Esophagus squamous epithelium (tissue), 5 donors: ENCODE measurements at regions of chr20 and their contacts with region 1.

Region 1: GRCh38 chr20:347640-348484 is 951 bp downstream of the NRSN2 start:
- DNase-seq: no peak
- H3K4me3 ChIP-seq: peak overlapping the region; percentile 68 to 78 (median 76)
- H3K27ac ChIP-seq: peak overlapping the region; percentile 80 to 96 (median 91)
- H3K4me1 ChIP-seq: peaks cover 6 to 34% (median 8%) of the 10 kb centered on the region in 3 donors
- H3K27me3 ChIP-seq: no peaks in the 10 kb centered on the region
- CTCF ChIP-seq: no peak
- POLR2A ChIP-seq: peak in 2 of 4 donors; percentile 19 to 38

Region 2: GRCh38 chr20:391041-391711 is 43.3 kb after region 1 on chr20:
- intact Hi-C with region 1: no loop called
- DNase-seq: no peak
- H3K4me3 ChIP-seq: no peak overlapping the region
- H3K27ac ChIP-seq: no peak overlapping the region
- H3K4me1 ChIP-seq: no peaks in the 10 kb centered on the region
- H3K27me3 ChIP-seq: no peaks in the 10 kb centered on the region
- CTCF ChIP-seq: no peak
- POLR2A ChIP-seq: no peak

Region 3: GRCh38 chr20:653110-653589 is 305.3 kb after region 1 on chr20 and contains the start of gene SRXN1:
- intact Hi-C with region 1: loop called (anchors 10 kb)
- DNase-seq: peak; percentile 39
- H3K4me3 ChIP-seq: peak within 1 kb of the TSS; percentile 68 to 91 (median 82)
- H3K27ac ChIP-seq: peak within 1 kb of the TSS; percentile 89 to 95 (median 92)
- H3K4me1 ChIP-seq: peaks cover 14 to 33% (median 25%) of the 10 kb centered on the region in 3 donors
- H3K27me3 ChIP-seq: peaks cover 0 to 9% (median 0%) of the 10 kb centered on the region in 4 donors
- CTCF ChIP-seq: peak in 5 of 6 experiments; percentile 42 to 67 (median 62)
- POLR2A ChIP-seq: peak in 2 of 4 donors; percentile 49 to 62
- total RNA-seq, gene SRXN1: 73.4 to 158 (median 133) TPM

Region 4: DNA sequence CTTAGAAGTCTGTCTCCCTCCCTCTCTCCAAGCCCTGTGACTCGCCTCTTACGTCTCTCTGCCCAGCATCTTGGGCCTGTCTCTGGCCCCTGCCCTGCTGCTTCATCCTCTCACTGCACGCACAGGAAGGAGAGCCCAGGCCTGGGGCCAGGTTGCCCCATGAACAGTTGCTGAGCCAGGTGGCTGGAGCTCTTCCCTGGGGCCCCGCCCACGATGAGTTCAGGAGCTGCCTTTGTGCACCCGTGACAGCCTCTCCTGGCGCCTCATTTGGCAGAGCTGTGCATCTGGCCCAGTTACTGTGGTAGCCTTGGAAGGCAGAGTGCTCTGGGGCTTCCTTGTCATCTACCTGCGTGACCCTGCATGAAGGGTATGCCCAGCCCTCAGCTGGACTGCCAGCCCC is 375.9 kb after region 1 on chr20:
- intact Hi-C with region 1: no loop called
- DNase-seq: no peak
- H3K4me3 ChIP-seq: no peak overlapping the region
- H3K27ac ChIP-seq: no peak overlapping the region
- H3K4me1 ChIP-seq: peaks cover 0 to 11% (median 10%) of the 10 kb centered on the region in 3 donors
- H3K27me3 ChIP-seq: peaks cover 0 to 100% (median 2%) of the 10 kb centered on the region in 4 donors
- CTCF ChIP-seq: no peak
- POLR2A ChIP-seq: no peak

Region 5: DNA sequence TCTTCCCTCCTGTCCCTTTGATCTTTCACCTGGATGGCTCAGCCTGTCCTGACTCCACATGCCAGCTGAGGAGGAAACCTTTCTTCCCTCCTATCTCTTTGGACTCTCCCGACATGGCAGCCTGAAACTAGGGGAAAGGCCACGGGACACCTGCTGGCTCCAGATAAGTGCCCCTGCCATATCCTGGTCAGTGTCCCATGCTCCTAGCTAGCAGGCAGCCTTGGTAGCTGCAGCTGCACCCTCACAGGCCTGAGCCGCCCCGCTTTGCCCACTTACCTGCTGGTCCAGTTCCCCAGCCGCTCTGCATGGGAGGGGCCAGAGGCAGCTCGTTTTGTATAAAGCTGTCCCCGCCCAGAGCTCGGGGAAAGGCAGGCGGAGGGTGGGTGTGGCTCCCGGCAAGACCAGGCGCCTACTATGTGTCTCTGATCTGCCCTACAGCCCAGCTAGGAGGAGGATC is 427.8 kb after region 1 on chr20:
- intact Hi-C with region 1: no loop called
- DNase-seq: no peak
- H3K4me3 ChIP-seq: no peak overlapping the region
- H3K27ac ChIP-seq: peak overlapping the region; percentile 15 to 63 (median 45)
- H3K4me1 ChIP-seq: peaks cover 0 to 14% (median 0%) of the 10 kb centered on the region in 3 donors
- H3K27me3 ChIP-seq: no peaks in the 10 kb centered on the region
- CTCF ChIP-seq: no peak
- POLR2A ChIP-seq: no peak